ENCODE measurements at regions of chr1 and their contacts with region 1.

Region 1: DNA sequence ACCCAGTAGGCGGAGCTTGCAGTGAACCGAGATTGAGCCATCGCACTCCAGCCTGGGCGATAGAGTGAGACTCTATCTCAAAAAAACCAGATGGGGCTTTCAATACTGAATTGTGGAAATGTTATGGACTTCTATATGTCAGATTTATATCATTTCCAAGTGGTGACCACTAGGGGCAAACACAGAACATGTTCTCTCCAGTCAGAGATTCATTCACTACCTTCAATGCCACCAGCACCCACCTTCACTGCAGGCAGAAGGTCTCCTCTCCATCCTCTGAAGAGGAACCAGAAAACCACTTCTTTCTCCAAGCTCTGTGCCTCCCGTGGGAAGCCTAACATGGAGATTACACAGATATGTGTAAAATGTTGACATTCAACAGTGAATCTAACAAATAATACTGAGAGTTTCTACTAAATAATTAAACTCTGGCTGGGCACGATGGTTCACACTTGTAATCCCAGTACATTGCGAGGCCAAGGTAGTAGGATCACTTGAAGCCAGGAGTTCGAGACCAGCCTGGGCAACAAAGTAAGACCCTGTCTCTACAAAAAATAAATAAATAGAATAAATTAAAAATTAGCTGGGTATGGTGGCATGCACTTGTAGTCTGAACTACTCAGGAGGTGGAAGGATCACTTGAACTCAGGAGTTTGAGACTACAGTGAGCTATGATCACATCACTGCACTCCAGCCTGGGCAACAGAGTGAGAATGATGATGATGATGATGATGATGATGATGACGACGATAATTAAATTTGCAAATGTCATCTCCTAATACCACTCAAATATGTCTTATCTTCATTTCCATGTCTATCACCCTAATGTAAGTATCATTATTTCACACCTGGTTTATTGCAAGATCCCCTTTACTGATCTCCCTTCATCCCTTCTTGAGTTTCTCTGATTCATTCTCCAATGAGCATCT is 151.1 kb downstream of the ZNF281 start:
- DNase-seq: peak in 3 of 14 experiments; percentile 23 to 41 (median 34)
- ATAC-seq: peak; percentile 46
- H3K4me3 ChIP-seq: no peak overlapping the region
- H3K4me3 Mint-ChIP-seq: no peak overlapping the region
- H3K27ac ChIP-seq: no peak overlapping the region
- H3K27ac Mint-ChIP-seq: no peak overlapping the region
- H3K4me1 ChIP-seq: no peaks in the 10 kb centered on the region
- H3K4me1 Mint-ChIP-seq: no peaks in the 10 kb centered on the region
- H3K27me3 ChIP-seq: peaks cover 0 to 2% of the 10 kb centered on the region in 2 experiments
- H3K27me3 Mint-ChIP-seq: peaks cover 3% of the 10 kb centered on the region
- CTCF ChIP-seq: peak; percentile 38

Region 2: DNA sequence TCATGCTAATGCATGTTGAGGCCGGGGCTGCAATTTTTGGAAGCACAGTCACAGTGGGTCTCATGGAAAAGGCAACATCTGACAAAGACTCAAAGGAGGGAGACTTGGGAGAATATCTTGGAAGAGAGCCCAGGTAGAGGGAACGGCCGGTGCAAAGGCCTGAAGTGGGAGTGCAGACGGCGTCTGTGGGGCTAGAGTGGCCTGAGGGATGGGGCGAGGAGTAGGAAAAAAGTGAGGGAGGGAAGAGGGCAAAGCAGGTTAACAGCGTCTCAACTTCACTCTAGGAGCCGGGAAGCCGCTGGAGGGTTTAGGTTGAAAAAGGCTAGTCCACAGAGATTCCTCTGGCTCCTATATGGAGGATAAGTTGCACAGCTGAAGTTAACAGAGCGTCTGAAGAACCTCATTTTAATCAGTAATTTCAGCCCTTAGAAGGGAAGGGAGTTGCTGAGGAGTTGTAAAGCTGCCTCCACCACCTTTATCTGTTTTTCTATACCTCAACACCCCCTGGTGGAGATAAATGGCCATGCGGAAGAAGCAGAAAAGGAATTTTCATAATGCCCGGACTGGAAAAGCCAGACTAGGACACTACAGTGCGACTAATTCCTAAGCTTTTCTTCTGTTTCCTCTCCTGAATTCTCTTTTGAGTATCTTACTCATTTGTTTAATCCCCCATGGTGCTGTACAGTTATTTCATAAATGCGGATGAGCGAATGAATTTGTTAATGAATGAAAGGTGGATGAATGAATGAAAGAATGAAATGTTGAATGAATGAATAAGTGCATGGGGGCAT is 229.9 kb after region 1 on chr1:
- CTCF ChIA-PET with region 1: no interaction called
- POLR2A ChIA-PET with region 1: no interaction called
- intact Hi-C with region 1: loop called in 1 of 2 experiments (anchors 5 kb)
- DNase-seq: peak in 12 of 14 experiments; percentile 9 to 69 (median 28)
- ATAC-seq: peak; percentile 52
- H3K4me3 ChIP-seq: no peak overlapping the region
- H3K4me3 Mint-ChIP-seq: no peak overlapping the region
- H3K27ac ChIP-seq: no peak overlapping the region
- H3K27ac Mint-ChIP-seq: no peak overlapping the region
- H3K4me1 ChIP-seq: peaks cover 10% of the 10 kb centered on the region
- H3K4me1 Mint-ChIP-seq: no peaks in the 10 kb centered on the region
- H3K27me3 ChIP-seq: no peaks in the 10 kb centered on the region
- H3K27me3 Mint-ChIP-seq: no peaks in the 10 kb centered on the region
- CTCF ChIP-seq: peak; percentile 79

Measured in CD4-positive, alpha-beta T cell (primary cell).